Dorsolateral prefrontal cortex (tissue), 120 donors: ENCODE measurements at regions of chr3 and their contacts with region 1.

Region 1: GRCh38 chr3:65785065-65785645 is 253.6 kb downstream of the MAGI1 start:
- DNase-seq: peak in 1 of 10 donors; percentile 23
- H3K4me3 ChIP-seq: peak overlapping the region in 7 of 59 donors; percentile 8 to 26 (median 15)
- H3K27ac ChIP-seq: peak overlapping the region in 8 of 59 donors; percentile 7 to 56 (median 44)
- H3K27me3 ChIP-seq: no peaks in the 10 kb centered on the region
- CTCF ChIP-seq: peak; percentile 70 to 97 (median 88)

Region 2: GRCh38 chr3:65914740-65915367 is 129.7 kb after region 1 on chr3:
- intact Hi-C with region 1: loop called (anchors 5 to 10 kb)
- DNase-seq: no peak
- H3K4me3 ChIP-seq: no peak overlapping the region
- H3K27ac ChIP-seq: no peak overlapping the region
- H3K27me3 ChIP-seq: no peaks in the 10 kb centered on the region
- CTCF ChIP-seq: peak in 27 of 56 donors; percentile 8 to 49 (median 25)

Region 3: GRCh38 chr3:66138336-66139313 is 353.5 kb after region 1 on chr3:
- intact Hi-C with region 1: loop called (anchors 5 to 10 kb)
- DNase-seq: peak in 7 of 10 donors; percentile 11 to 75 (median 48)
- H3K4me3 ChIP-seq: no peak overlapping the region
- H3K27ac ChIP-seq: peak overlapping the region in 1 of 59 donors; percentile 77
- H3K27me3 ChIP-seq: no peaks in the 10 kb centered on the region
- CTCF ChIP-seq: peak; percentile 45 to 85 (median 68)

Region 4: DNA sequence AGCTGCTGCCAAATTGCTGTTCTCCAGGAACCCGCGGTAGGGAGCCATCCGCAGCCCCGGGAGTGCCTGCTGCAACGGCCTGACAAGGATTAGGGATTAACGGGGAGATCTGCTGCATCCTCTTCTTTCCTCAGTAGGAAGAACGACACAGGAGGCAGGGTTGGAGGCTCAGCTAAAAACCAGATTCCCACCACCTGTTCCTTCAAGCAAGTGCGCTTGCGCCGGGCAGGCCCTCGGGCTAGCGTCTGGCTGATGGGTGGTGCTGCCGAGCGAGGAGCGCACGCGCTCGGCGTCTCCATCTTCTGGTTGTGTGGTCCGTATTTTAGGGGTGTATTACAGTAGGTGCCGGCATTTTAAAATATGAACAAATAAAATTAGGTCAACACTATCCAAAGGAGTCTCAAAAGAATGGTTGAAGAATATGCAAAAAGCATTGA is 410.2 kb after region 1 on chr3:
- intact Hi-C with region 1: loop called (anchors 5 to 10 kb)
- DNase-seq: peak; percentile 60 to 92 (median 78)
- H3K4me3 ChIP-seq: peak overlapping the region; percentile 29 to 71 (median 57)
- H3K27ac ChIP-seq: peak overlapping the region in 7 of 59 donors; percentile 9 to 79 (median 38)
- H3K27me3 ChIP-seq: no peaks in the 10 kb centered on the region
- CTCF ChIP-seq: peak in 53 of 56 donors; percentile 9 to 70 (median 49)